ENCODE measurements at regions of chr4 and their contacts with region 1.

Region 1: GRCh38 chr4:99894161-99894997 is at the start of gene LAMTOR3:
- DNase-seq: peak; percentile 83 to 93 (median 90)
- H3K4me3 ChIP-seq: peak within 1 kb of the TSS; percentile 69 to 97 (median 88)
- H3K27ac ChIP-seq: peak within 1 kb of the TSS in 56 of 59 donors; percentile 13 to 91 (median 79)
- H3K27me3 ChIP-seq: no peaks in the 10 kb centered on the region
- CTCF ChIP-seq: peak in 13 of 56 donors; percentile 12 to 43 (median 22)
- total RNA-seq, gene LAMTOR3: 26.6 to 58.4 (median 43.5) TPM

Region 2: DNA sequence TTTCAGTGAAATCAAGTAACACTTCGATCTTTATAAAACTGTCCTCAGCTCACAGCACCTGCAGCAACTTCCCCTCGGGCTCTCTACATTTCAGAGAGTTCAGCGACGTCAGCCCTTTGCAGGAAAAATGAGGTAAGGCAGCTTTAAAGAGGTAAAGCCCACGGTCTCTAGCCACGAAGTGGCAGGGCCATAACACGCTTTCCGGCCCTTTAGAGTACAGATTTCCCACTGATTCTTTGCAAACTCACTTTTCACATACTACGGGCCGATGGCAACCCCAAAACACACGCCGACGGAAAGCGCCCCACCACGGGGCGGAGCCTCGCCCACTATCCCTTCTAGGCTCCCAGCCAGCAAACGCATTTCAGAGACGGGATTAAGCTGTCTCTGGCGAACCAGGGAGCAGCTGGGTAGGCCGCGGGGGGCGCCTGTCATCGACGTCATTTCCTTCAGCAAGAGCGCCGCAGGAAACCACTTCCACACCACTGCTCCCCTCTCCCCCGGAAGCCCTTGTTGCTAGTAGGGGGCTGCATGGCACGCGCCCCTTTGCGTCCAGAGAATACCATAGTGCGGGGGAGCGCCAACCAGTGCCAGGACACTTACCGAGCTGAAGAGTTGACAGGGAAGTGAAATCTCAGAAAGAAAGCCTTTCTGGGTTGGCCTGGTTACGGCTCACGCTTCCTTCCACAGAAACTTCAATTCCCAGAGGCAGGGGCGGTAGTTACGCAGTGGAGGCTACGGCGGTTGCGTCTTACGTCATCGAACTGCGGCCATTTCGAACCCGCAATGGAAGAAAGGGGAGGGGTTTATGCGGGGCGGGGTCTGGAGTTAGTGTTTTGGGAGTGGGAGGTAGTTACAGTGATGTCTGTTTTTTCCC is 330.8 kb before region 1 on chr4 and contains the start of gene TRMT10A:
- intact Hi-C with region 1: loop called (anchors 1 to 2 kb)
- DNase-seq: peak; percentile 97 to 99 (median 98)
- H3K4me3 ChIP-seq: peak within 1 kb of the TSS; percentile 60 to 96 (median 84)
- H3K27ac ChIP-seq: peak within 1 kb of the TSS; percentile 85 to 99 (median 97)
- H3K27me3 ChIP-seq: peaks cover 0 to 5% (median 0%) of the 10 kb centered on the region in 45 donors
- CTCF ChIP-seq: peak in 38 of 56 donors; percentile 8 to 50 (median 33)
- total RNA-seq, gene TRMT10A: 2.0 to 11.6 (median 5.3) TPM

Region 3: GRCh38 chr4:99847362-99847976 is 46.9 kb before region 1 on chr4:
- intact Hi-C with region 1: no loop called
- DNase-seq: no peak
- H3K4me3 ChIP-seq: no peak overlapping the region
- H3K27ac ChIP-seq: no peak overlapping the region
- H3K27me3 ChIP-seq: no peaks in the 10 kb centered on the region
- CTCF ChIP-seq: no peak

Region 4: GRCh38 chr4:100147198-100147597 is 252.8 kb after region 1 on chr4:
- intact Hi-C with region 1: no loop called
- DNase-seq: no peak
- H3K4me3 ChIP-seq: no peak overlapping the region
- H3K27ac ChIP-seq: no peak overlapping the region
- H3K27me3 ChIP-seq: no peaks in the 10 kb centered on the region
- CTCF ChIP-seq: no peak

Measured in dorsolateral prefrontal cortex (tissue), 120 donors.